ENCODE measurements at regions of chr22 and their contacts with region 1.

Region 1: DNA sequence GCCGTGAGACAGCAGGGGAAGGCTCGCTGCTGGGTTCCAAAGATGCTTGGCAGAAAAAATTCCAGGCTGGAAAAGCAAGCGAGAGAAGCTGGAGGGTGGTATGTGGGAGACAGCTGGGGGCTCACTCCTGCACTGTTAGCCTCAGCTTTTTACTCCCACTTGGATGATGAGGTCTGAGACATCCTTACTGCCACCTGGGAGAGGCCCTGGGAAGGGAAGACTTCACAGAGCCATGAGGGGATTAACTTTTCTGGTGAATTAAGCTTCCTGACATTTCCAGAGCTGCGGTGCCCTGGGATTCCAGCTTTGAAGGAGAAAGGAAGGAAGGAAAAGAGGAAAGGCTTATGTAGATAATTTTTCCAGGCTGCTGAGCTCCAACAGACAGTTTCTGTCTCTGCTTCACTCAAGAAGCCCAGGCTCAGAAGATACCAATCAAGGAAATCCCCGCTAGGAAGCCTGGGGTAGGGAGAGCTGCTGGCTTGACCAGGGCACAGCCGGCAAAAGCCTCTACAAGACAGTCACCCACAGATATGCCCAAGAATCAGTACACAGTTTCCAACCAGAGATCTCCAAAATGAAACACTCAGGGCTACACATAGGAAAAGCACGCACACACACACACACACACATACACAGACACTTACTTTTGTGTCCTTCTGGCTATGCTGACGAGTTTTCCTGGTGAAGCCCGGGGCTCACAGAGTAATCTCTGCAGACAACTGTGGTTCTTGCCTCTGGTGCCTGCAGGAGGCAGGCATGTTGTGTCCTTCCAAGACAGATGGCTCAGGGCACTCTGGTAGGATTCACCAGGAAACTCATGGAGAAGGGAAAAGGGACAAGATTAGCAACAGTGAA is 907 bp downstream of the MCHR1 start:
- DNase-seq: peak; percentile 38
- H3K4me3 ChIP-seq: no peak overlapping the region
- H3K27ac ChIP-seq: no peak overlapping the region
- H3K4me1 ChIP-seq: peaks cover 7% of the 10 kb centered on the region
- H3K27me3 ChIP-seq: peaks cover 19 to 20% of the 10 kb centered on the region in 2 experiments
- CTCF ChIP-seq: peak in 1 of 2 donors; percentile 7
- POLR2A ChIP-seq: no peak

Region 2: DNA sequence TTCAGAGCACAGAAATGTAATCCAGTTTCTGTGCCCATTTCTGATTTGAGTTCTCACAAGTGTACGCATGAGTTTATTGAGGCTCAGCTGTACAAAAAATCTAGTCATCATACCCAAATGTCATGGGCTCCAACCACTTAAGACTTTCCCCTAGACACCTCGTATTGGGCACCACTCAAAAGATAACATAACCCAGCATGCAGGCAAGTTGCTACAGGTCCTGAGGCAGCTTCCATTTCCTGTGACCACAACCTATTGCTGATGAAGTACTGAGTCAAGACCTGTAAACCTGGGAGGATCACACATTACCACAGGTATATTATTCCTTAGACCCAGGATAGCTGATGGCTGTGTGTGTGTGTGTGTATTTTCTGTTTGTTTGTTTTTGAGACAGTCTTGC is 138.9 kb before region 1 on chr22:
- CTCF ChIA-PET with region 1: no interaction called
- POLR2A ChIA-PET with region 1: no interaction called
- dilution Hi-C with region 1: no loop called
- intact Hi-C with region 1: no loop called
- DNase-seq: no peak
- H3K4me3 ChIP-seq: no peak overlapping the region
- H3K27ac ChIP-seq: no peak overlapping the region
- H3K4me1 ChIP-seq: no peaks in the 10 kb centered on the region
- H3K27me3 ChIP-seq: no peaks in the 10 kb centered on the region
- CTCF ChIP-seq: no peak
- POLR2A ChIP-seq: no peak

Region 3: GRCh38 chr22:40694411-40694810 is 14.2 kb after region 1 on chr22:
- CTCF ChIA-PET with region 1: interaction called, 11 read pairs
- POLR2A ChIA-PET with region 1: no interaction called
- dilution Hi-C with region 1: no loop called
- intact Hi-C with region 1: no loop called
- DNase-seq: no peak
- H3K4me3 ChIP-seq: no peak overlapping the region
- H3K27ac ChIP-seq: no peak overlapping the region
- H3K4me1 ChIP-seq: no peaks in the 10 kb centered on the region
- H3K27me3 ChIP-seq: peaks cover 7 to 9% of the 10 kb centered on the region in 2 experiments
- CTCF ChIP-seq: no peak
- POLR2A ChIP-seq: no peak

Region 4: DNA sequence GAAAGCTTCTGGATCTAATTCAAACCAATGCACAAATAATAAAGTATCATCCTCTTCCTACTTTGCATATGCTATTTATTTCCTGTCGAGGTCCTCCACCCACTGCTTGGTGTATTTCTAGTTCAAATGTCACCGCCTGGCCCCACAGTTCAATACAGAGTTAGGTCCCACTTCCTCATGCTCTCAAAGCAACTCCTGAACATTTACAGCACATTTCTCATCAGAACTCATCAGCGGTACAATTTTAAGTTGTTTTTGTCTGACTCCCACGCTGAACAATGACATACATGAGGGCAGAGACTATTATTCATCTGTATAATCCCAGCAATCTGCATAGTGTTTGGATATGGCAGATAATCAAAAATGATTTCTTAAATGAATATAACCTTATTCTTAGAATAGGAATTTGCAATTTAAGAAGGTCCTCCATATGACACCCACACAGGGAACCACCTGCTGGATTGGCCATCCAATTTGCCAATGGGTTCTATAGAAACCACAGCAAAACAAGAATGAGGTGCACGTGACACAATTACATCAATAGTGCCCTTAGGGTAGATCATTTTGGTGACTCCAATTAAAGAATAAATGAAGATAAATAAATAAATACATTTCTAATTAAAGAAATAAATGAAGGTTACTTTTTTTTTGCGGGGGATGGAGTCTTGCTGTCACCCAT is 84.7 kb after region 1 on chr22:
- CTCF ChIA-PET with region 1: interaction called, 189 read pairs
- POLR2A ChIA-PET with region 1: no interaction called
- dilution Hi-C with region 1: no loop called
- intact Hi-C with region 1: loop called (anchors 1 kb)
- DNase-seq: no peak
- H3K4me3 ChIP-seq: no peak overlapping the region
- H3K27ac ChIP-seq: no peak overlapping the region
- H3K4me1 ChIP-seq: no peaks in the 10 kb centered on the region
- H3K27me3 ChIP-seq: no peaks in the 10 kb centered on the region
- CTCF ChIP-seq: no peak
- POLR2A ChIP-seq: no peak

Region 5: DNA sequence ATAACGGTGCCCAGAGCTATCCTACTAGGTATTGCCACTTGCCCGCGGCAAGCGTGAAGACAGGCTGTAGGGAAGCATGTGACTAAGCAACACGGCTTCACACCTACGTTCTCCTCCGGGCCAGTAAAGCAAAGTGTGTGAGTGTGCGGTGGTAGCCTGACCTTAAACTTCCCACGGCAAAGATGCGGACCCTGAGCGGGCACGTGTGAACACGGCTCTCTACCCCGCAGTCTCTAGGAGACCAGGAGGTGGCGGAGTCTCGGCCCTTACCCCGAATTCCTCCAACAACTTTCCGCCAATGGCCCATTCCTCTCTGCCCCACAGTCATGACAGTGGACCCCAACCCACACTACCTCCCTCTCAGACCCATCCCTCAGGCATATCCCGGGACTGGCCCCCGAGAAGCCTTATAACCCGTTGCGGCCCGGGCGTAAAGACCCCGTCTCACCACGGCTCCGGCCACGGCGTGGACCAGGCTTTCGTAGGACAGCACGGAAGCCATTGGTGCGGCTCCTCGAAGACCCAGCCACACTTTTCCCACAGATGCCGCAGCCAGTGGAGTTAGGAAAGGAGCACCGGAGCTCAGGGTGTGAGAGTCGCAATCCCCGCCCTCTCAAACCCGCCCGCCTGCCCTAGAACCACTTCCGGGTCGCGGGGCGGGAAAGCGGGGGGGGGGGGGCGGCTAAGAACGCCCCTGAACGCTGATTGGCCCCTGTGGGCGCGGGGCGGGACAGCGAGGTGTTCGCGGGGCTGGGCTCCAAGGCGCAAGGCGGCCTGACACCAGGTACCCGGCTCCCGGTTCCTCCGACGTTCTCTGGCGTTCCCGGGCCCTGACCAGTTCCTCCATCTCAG is 138.8 kb after region 1 on chr22 and contains the start of gene SLC25A17:
- CTCF ChIA-PET with region 1: interaction called, 24 read pairs
- POLR2A ChIA-PET with region 1: no interaction called
- dilution Hi-C with region 1: no loop called
- intact Hi-C with region 1: loop called (anchors 2 kb)
- DNase-seq: peak; percentile 87
- H3K4me3 ChIP-seq: peak within 1 kb of the TSS; percentile 80 to 95 (median 83)
- H3K27ac ChIP-seq: peak within 1 kb of the TSS; percentile 46
- H3K4me1 ChIP-seq: peaks cover 15% of the 10 kb centered on the region
- H3K27me3 ChIP-seq: no peaks in the 10 kb centered on the region
- CTCF ChIP-seq: peak; percentile 34 to 61
- POLR2A ChIP-seq: peak; percentile 69
- total RNA-seq, gene SLC25A17: 24.9 and 25.8 TPM in 2 replicates